Breast epithelium (tissue), 4 donors: ENCODE measurements at regions of chr9 and their contacts with region 1.

Region 1: GRCh38 chr9:7481570-7481969 is 318.0 kb downstream of the DMAC1 start:
- DNase-seq: no peak
- H3K4me3 ChIP-seq: no peak overlapping the region
- H3K27ac ChIP-seq: no peak overlapping the region
- H3K4me1 ChIP-seq: no peaks in the 10 kb centered on the region
- H3K27me3 ChIP-seq: no peaks in the 10 kb centered on the region
- CTCF ChIP-seq: no peak
- POLR2A ChIP-seq: no peak

Region 2: DNA sequence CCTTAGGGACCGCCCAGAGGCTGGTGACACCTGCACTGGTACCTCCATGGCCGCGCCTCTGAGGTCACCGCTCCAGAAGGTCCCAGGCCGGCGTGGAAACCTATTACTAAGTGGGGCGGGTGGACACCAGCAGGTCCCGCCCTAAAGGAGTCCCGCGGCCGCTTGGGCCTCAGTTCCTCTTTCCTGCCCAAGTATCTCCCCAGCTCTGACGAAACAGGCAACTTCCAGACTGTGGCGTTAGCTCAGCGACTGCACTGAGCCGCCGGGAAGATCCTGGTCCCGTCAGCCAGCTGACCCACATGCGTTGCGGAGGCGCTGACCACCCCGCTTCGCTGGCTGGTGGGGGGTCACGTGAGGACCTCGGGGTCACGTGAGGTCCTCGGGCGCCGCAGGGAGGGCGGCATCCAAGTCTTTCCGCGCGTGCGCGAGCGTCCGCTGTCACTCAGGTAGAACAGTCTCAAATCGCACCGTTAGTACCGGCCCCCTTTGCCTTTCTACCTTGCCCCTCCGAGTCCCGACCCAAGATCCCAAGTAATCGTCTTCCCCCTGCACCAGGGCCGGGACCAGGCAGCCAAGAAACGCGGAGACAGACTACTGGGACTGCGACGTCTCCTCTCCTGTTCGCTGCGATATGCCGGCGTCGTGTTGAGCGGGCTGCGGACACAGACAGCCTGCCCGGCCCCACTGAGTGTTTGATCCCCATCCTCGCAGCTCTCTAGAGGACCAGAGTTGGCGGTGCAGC is 777.5 kb before region 1 on chr9:
- intact Hi-C with region 1: no loop called
- DNase-seq: peak; percentile 71 to 75
- H3K4me3 ChIP-seq: peak overlapping the region; percentile 48 to 69 (median 64)
- H3K27ac ChIP-seq: peak overlapping the region; percentile 79 to 94
- H3K4me1 ChIP-seq: no peaks in the 10 kb centered on the region
- H3K27me3 ChIP-seq: no peaks in the 10 kb centered on the region
- CTCF ChIP-seq: no peak
- POLR2A ChIP-seq: peak; percentile 57

Region 3: GRCh38 chr9:8244505-8245092 is 763.0 kb after region 1 on chr9:
- intact Hi-C with region 1: loop called (anchors 5 kb)
- DNase-seq: no peak
- H3K4me3 ChIP-seq: no peak overlapping the region
- H3K27ac ChIP-seq: no peak overlapping the region
- H3K4me1 ChIP-seq: no peaks in the 10 kb centered on the region
- H3K27me3 ChIP-seq: no peaks in the 10 kb centered on the region
- CTCF ChIP-seq: no peak
- POLR2A ChIP-seq: no peak